GM18951 (cell line): ENCODE measurements at regions of chr12 and their contacts with region 1.

Region 1: GRCh38 chr12:54229624-54230212 is 40.9 kb upstream of the SMUG1 start:
- POLR2A ChIP-seq: no peak

Region 2: DNA sequence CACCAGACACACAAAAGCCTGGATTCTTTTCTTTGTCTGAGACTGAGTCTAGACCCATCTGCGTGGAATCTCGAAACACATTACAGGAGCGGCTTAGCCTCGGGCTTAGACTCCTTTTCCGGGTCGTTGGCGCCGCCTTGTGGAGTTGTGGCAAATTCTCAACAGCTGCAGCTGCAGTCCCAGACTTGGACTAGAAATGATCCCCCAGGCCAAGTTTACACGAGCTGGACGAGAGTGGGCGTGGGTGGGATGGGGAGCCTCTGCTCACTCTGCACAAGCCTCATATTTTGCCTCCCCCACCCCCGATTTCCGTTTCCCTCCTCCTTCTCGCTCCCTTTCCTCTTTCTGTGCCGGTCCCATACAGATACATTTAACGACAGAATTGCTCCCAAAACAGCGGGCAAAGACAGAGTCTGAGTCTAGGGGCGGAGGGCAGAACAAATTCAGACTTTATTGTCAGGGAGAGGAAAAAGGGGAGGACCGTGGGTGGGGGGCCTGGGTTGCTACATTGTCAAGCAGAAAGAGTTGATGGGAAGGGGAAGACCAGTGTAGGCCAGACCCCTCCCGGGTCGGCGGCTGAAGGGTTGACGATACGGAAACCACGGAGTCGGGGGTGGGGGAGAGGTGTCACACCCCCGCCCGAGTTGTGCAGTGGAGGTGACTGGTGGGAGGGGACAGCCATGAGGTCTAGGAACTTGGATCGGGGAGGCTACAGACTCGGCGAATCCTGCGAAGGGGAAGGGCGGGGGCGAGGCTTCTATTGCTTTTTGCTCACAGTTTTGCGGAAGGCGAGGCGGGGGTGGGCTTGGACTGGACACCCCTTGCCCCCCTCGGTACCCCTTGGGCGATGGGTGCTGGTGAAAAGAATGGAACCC is 139.2 kb after region 1 on chr12:
- in situ Hi-C with region 1: loop called (anchors 10 kb)
- POLR2A ChIP-seq: no peak

Region 3: DNA sequence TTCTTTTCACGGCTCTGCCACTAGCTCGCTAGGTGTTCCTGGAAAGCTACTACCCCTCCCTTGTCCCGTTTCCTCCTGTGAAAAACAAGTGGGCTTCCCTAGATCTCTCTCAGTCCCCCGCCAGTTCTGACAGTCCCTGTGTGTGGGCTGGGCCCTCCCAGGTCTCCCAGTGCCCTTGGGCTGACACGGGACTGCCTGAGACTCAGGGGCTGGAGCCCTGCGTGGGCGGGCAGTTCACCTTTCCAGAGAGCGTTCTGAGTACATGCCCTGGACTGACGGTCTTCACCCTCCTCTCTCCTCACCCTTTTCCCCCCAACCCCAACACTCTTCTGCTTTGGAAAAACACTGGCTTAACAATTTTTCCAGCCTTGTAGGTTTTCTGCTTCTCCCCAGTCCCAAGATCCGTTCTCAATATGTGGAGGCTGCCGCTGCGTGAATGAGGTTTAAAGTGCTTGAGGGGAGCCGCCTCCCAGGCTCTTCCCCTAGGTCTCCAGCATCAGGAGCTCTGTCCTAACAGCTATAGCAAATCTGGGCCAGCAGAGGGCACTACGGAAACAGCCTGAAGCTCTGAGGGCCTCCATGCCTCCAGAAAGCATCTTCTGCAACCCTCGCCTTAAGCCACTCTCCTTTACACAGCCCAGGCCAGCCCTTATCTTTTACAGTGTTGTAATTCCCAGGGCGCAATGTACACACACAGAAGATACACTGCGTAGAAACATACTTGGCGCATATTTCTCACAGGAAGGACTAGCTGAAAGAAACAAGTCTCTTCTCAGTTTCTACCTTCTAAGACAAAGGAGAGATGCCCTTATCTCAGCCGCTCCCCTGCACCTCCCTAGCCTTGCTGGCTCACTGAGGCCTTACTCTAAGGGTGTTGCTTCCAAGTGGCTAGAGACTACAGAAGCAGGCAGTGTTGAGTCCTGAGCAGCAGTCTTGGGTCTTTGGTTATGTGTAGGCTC is 428.9 kb after region 1 on chr12:
- in situ Hi-C with region 1: no loop called
- POLR2A ChIP-seq: no peak